Posterior cingulate gyrus (tissue), 11 donors: ENCODE measurements at regions of chr9 and their contacts with region 1.

Region 1: GRCh38 chr9:9942764-9943424 is 669.9 kb downstream of the PTPRD start:
- DNase-seq: peak; percentile 47 to 95 (median 79)

Region 2: DNA sequence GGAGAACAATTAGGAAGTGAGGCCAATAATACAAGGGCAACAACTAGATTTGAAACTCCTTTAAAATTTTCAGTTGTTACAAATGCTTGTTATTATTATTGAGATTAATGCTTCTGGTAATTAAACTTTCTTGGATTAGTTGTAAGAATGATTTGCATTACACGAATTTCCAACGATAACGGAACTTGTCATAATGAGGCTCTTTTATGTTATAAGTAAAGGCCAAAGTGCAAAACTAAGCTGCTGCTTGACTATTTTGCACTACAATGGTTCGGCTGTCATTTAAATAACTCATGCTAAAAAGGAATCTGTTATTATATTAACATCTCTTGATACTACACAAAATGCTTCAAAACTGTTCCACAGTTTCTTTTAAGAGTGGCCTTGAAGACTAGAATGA is 337.2 kb before region 1 on chr9:
- intact Hi-C with region 1: loop called (anchors 5 kb)
- DNase-seq: no peak

Region 3: GRCh38 chr9:9893822-9894221 is 49.1 kb before region 1 on chr9:
- intact Hi-C with region 1: no loop called
- DNase-seq: no peak